Heart left ventricle (tissue), 16 donors: ENCODE measurements at regions of chr16 and their contacts with region 1.

Region 1: GRCh38 chr16:81616321-81617055 is 162.6 kb upstream of the PLCG2 start:
- DNase-seq: peak; percentile 70 to 88 (median 76)
- ATAC-seq: peak in 3 of 4 donors; percentile 60 to 82 (median 66)
- H3K4me3 ChIP-seq: peak overlapping the region in 1 of 12 donors; percentile 12
- H3K27ac ChIP-seq: peak overlapping the region in 1 of 12 donors; percentile 78
- H3K4me1 ChIP-seq: peaks cover 7 to 52% (median 39%) of the 10 kb centered on the region in 12 donors
- H3K27me3 ChIP-seq: no peaks in the 10 kb centered on the region
- CTCF ChIP-seq: no peak
- POLR2A ChIP-seq: no peak

Region 2: DNA sequence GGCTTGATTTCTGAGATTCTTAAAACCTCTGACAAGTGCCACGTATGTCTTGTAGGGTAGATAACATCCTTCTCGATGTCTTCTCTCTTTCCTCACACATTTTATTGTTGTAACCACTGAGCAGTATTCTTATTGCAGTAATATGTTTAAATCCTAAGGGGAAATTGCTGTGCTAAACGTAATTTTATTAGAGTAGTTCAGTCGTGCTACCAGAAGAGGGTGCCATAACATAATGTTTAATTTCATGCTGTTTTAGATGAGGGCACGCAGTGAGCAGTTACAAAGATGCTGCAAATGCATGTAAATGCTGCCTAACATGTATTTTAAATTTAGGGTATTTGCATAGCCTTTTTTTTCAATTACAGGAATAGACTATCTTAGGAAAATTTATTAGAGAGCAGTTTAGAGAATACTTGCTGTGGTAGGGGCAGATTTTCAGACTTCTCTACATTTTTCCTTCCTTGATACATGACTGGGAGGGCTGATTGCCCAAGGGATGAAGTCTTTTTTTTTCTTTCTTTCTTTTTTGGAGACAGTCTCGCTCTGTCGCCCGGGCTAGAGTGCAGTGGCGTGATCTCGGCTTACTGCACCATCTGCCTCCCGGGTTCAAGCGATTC is 250.1 kb before region 1 on chr16:
- intact Hi-C with region 1: loop called in 1 of 10 experiments (anchors 10 kb)
- DNase-seq: no peak
- ATAC-seq: peak in 3 of 4 donors; percentile 60 to 74 (median 61)
- H3K4me3 ChIP-seq: no peak overlapping the region
- H3K27ac ChIP-seq: no peak overlapping the region
- H3K4me1 ChIP-seq: peaks cover 0 to 25% (median 6%) of the 10 kb centered on the region in 12 donors
- H3K27me3 ChIP-seq: no peaks in the 10 kb centered on the region
- CTCF ChIP-seq: peak; percentile 49 to 76 (median 62)
- POLR2A ChIP-seq: no peak

Region 3: GRCh38 chr16:81444448-81445121 is 171.9 kb before region 1 on chr16 and contains the start of gene CMIP:
- intact Hi-C with region 1: loop called in 4 of 10 experiments (anchors 5 to 10 kb)
- DNase-seq: peak; percentile 88 to 92 (median 89)
- ATAC-seq: peak; percentile 35 to 92 (median 86)
- H3K4me3 ChIP-seq: peak within 1 kb of the TSS; percentile 54 to 96 (median 78)
- H3K27ac ChIP-seq: peak within 1 kb of the TSS; percentile 52 to 96 (median 81)
- H3K4me1 ChIP-seq: peaks cover 0 to 36% (median 17%) of the 10 kb centered on the region in 12 donors
- H3K27me3 ChIP-seq: no peaks in the 10 kb centered on the region
- CTCF ChIP-seq: no peak
- POLR2A ChIP-seq: no peak
- total RNA-seq, gene CMIP: 7.6 to 48.8 (median 16.3) TPM

Region 4: DNA sequence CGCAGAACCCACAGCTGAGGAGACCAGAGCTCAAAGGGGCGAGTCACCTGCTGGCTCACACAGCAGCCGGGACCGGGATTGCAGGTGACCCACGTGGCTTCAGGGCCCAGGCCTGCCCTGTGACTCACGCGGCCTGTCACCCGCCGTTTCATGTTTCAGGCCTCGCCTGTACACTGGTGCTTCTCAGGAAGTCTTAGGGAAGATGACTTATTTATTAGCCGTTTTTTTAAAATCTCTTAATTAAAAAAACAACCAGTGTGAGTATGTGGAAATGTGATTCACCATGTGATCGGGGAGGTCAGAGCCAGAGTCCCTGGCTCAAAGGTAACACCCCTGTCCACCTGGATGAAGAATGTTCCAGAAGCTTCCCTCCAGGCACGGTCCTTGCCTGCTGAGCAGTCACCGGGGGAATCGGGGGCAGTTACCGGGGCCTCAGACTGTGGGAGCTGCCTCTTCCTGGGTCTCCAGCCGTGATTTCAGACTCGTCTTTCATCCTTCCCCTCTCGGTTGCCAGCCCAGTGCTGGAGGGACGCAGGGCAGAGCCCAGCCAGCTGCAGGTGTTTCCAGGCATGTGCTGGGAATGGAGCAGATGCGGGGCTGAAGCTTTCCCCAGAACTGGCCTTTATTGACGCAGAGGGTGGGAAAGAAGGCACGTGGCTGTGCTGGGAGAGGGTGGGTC is 122.6 kb before region 1 on chr16:
- intact Hi-C with region 1: loop called in 2 of 10 experiments (anchors 2 to 10 kb)
- DNase-seq: peak in 1 of 5 donors; percentile 24
- ATAC-seq: peak; percentile 30 to 85 (median 54)
- H3K4me3 ChIP-seq: no peak overlapping the region
- H3K27ac ChIP-seq: peak overlapping the region in 11 of 12 donors; percentile 13 to 81 (median 74)
- H3K4me1 ChIP-seq: peaks cover 3 to 96% (median 47%) of the 10 kb centered on the region in 12 donors
- H3K27me3 ChIP-seq: no peaks in the 10 kb centered on the region
- CTCF ChIP-seq: no peak
- POLR2A ChIP-seq: no peak

Region 5: GRCh38 chr16:81551151-81551808 is 65.2 kb before region 1 on chr16:
- intact Hi-C with region 1: loop called in 1 of 10 experiments (anchors 10 kb)
- DNase-seq: no peak
- ATAC-seq: peak in 3 of 4 donors; percentile 19 to 58 (median 32)
- H3K4me3 ChIP-seq: no peak overlapping the region
- H3K27ac ChIP-seq: peak overlapping the region in 6 of 12 donors; percentile 17 to 52 (median 32)
- H3K4me1 ChIP-seq: peaks cover 0 to 77% (median 42%) of the 10 kb centered on the region in 12 donors
- H3K27me3 ChIP-seq: no peaks in the 10 kb centered on the region
- CTCF ChIP-seq: no peak
- POLR2A ChIP-seq: no peak